ENCODE measurements at regions of chr17 and their contacts with region 1.

Region 1: GRCh38 chr17:10631048-10631700 is 25.9 kb downstream of the MYH3 start:
- DNase-seq: no peak
- H3K4me3 ChIP-seq: no peak overlapping the region
- H3K27ac ChIP-seq: no peak overlapping the region
- H3K4me1 ChIP-seq: no peaks in the 10 kb centered on the region
- H3K27me3 ChIP-seq: no peaks in the 10 kb centered on the region
- CTCF ChIP-seq: peak; percentile 76 to 83

Region 2: DNA sequence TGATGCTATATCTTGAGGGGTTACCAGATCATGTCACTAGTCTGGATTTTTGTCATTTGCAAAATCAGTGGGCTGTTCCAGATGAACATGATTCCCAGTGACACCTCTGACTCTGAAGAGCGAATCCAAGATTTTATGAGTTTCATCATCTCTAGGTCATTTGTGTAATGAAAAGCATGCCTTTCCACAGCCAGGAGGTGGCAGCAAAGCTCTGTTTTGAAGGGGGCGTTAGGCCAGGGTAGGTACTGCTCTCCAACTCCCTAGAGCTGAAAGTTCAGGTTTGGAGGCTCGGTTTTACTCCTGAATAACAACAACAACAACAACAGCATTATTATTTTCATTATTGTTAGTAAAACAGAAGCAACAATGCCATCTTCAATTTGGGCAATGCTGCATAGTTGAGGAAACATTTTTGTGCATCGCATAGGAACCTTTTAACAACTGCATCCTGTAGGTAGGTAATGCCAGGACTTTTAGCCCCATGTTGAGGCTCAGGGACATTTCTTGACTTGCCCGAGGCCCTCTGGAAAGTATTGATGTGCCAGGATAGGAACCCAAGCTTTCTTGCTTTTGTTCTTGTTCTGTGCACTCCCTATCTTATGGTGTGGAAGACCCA is 335.3 kb before region 1 on chr17:
- CTCF ChIA-PET with region 1: no interaction called
- dilution Hi-C with region 1: no loop called
- in situ Hi-C with region 1: loop called in 1 of 2 experiments (anchors 10 kb)
- intact Hi-C with region 1: no loop called
- DNase-seq: peak; percentile 2
- H3K4me3 ChIP-seq: no peak overlapping the region
- H3K27ac ChIP-seq: no peak overlapping the region
- H3K4me1 ChIP-seq: peaks cover 3% of the 10 kb centered on the region
- H3K27me3 ChIP-seq: no peaks in the 10 kb centered on the region
- CTCF ChIP-seq: peak; percentile 46 to 65

Region 3: GRCh38 chr17:10600571-10600970 is 30.6 kb before region 1 on chr17:
- CTCF ChIA-PET with region 1: no interaction called
- dilution Hi-C with region 1: no loop called
- in situ Hi-C with region 1: no loop called
- intact Hi-C with region 1: no loop called
- DNase-seq: no peak
- H3K4me3 ChIP-seq: no peak overlapping the region
- H3K27ac ChIP-seq: no peak overlapping the region
- H3K4me1 ChIP-seq: no peaks in the 10 kb centered on the region
- H3K27me3 ChIP-seq: no peaks in the 10 kb centered on the region
- CTCF ChIP-seq: no peak

Region 4: GRCh38 chr17:10844621-10845387 is 213.6 kb after region 1 on chr17:
- CTCF ChIA-PET with region 1: no interaction called
- dilution Hi-C with region 1: no loop called
- in situ Hi-C with region 1: no loop called
- intact Hi-C with region 1: loop called (anchors 5 kb)
- DNase-seq: peak; percentile 22
- H3K4me3 ChIP-seq: peak overlapping the region in 2 of 3 experiments; percentile 22 to 47
- H3K27ac ChIP-seq: no peak overlapping the region
- H3K4me1 ChIP-seq: no peaks in the 10 kb centered on the region
- H3K27me3 ChIP-seq: no peaks in the 10 kb centered on the region
- CTCF ChIP-seq: peak; percentile 66 to 82

Measured in mammary epithelial cell (primary cell).